PC-9 (cell line): ENCODE measurements at regions of chr13 and their contacts with region 1.

Region 1: DNA sequence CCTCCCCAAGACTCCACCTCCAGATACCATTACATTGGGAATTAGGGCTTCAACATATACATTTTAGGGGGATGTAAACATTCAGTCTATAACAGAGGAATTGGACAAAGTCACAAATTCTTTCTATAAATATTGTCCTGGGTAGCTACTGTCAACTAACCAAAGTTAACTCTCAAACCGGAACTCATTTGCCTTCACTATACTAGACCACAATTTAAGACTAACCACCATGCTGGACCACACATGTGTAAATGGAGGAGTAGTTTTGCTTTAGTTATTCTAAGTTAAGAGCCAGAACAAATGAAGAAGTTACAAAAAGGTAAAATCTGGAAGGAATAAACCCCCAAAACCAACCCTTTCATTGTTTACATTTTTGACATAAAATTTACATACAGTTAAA is 222.8 kb downstream of the NDFIP2 start:
- DNase-seq: no peak
- H3K4me3 ChIP-seq: no peak overlapping the region
- H3K27ac ChIP-seq: no peak overlapping the region
- H3K4me1 ChIP-seq: no peaks in the 10 kb centered on the region
- H3K27me3 ChIP-seq: no peaks in the 10 kb centered on the region
- CTCF ChIP-seq: no peak

Region 2: DNA sequence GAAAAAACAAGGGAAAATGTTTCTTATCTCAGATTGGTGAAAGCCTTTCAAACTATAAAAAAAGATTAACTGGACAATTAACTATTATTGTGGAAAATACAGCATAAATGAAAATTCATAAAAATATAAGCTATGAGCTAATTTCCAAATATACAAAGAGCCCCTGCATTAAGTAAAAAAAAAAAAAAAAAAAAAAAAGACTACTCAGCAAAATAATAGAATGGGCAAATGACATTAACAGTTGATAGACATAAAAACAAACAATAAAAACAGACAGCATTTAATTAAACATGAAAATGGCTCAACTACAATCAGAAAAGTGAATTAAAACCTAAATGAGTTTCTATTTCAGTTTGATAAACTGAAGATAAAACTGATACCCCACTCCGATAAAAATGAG is 375.3 kb before region 1 on chr13:
- CTCF ChIA-PET with region 1: no interaction called
- POLR2A ChIA-PET with region 1: no interaction called
- intact Hi-C with region 1: loop called (anchors 5 kb)
- DNase-seq: no peak
- H3K4me3 ChIP-seq: no peak overlapping the region
- H3K27ac ChIP-seq: no peak overlapping the region
- H3K4me1 ChIP-seq: no peaks in the 10 kb centered on the region
- H3K27me3 ChIP-seq: no peaks in the 10 kb centered on the region
- CTCF ChIP-seq: no peak

Region 3: GRCh38 chr13:79589603-79590393 is 114.0 kb before region 1 on chr13:
- CTCF ChIA-PET with region 1: no interaction called
- POLR2A ChIA-PET with region 1: no interaction called
- intact Hi-C with region 1: no loop called
- DNase-seq: peak in 1 of 2 experiments; percentile 70
- H3K4me3 ChIP-seq: peak overlapping the region; percentile 43; the same call in 1 of the 2 replicates
- H3K27ac ChIP-seq: peak overlapping the region; percentile 77
- H3K4me1 ChIP-seq: peaks cover 21% of the 10 kb centered on the region
- H3K27me3 ChIP-seq: no peaks in the 10 kb centered on the region
- CTCF ChIP-seq: no peak

Region 4: GRCh38 chr13:79684371-79684770 is 19.4 kb before region 1 on chr13:
- CTCF ChIA-PET with region 1: no interaction called
- POLR2A ChIA-PET with region 1: no interaction called
- intact Hi-C with region 1: loop called (anchors 2 kb)
- DNase-seq: no peak
- H3K4me3 ChIP-seq: no peak overlapping the region
- H3K27ac ChIP-seq: no peak overlapping the region
- H3K4me1 ChIP-seq: peaks cover 16% of the 10 kb centered on the region
- H3K27me3 ChIP-seq: no peaks in the 10 kb centered on the region
- CTCF ChIP-seq: no peak

Region 5: GRCh38 chr13:80030491-80030890 is 326.7 kb after region 1 on chr13:
- CTCF ChIA-PET with region 1: no interaction called
- POLR2A ChIA-PET with region 1: no interaction called
- intact Hi-C with region 1: no loop called
- DNase-seq: peak; percentile 77 to 80
- H3K4me3 ChIP-seq: no peak overlapping the region
- H3K27ac ChIP-seq: no peak overlapping the region
- H3K4me1 ChIP-seq: peaks cover 10% of the 10 kb centered on the region
- H3K27me3 ChIP-seq: no peaks in the 10 kb centered on the region
- CTCF ChIP-seq: peak; percentile 58